ENCODE measurements at regions of chr1 and their contacts with region 1.

Region 1: DNA sequence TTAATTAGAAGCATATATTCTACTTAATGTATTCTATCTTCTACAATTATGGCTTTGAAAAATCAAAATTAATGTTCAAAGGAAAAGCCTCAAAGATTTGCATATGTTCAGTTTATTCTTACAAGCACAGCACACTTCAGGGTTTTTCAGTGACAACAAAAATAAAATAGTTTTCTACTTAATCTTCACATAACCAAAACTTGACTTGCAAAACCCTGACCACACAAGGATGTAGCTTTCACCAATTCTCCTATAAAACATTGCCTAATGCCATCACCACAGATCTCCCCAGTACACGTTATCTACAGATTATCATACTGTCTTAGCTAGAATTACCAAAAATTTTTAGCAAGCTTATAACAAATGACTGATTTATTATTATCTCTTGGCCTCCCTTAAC is 23.3 kb downstream of the LPAR3 start:
- DNase-seq: no peak
- H3K4me3 ChIP-seq: no peak overlapping the region
- H3K27ac ChIP-seq: no peak overlapping the region
- H3K4me1 ChIP-seq: no peaks in the 10 kb centered on the region
- H3K27me3 ChIP-seq: no peaks in the 10 kb centered on the region
- CTCF ChIP-seq: no peak
- POLR2A ChIP-seq: no peak

Region 2: GRCh38 chr1:84920159-84920558 is 50.4 kb after region 1 on chr1:
- intact Hi-C with region 1: loop called (anchors 1 kb)
- DNase-seq: no peak
- H3K4me3 ChIP-seq: no peak overlapping the region
- H3K27ac ChIP-seq: no peak overlapping the region
- H3K4me1 ChIP-seq: no peaks in the 10 kb centered on the region
- H3K27me3 ChIP-seq: no peaks in the 10 kb centered on the region
- CTCF ChIP-seq: no peak
- POLR2A ChIP-seq: no peak